ENCODE measurements at regions of chr1 and their contacts with region 1.

Region 1: GRCh38 chr1:159009704-159010361 is at the start of gene IFI16:
- DNase-seq: peak; percentile 70
- H3K4me3 Mint-ChIP-seq: peak within 1 kb of the TSS; percentile 96
- H3K27ac Mint-ChIP-seq: peak within 1 kb of the TSS; percentile 99
- H3K4me1 Mint-ChIP-seq: peaks cover 57% of the 10 kb centered on the region
- H3K27me3 Mint-ChIP-seq: no peaks in the 10 kb centered on the region
- total RNA-seq, gene IFI16: 108 and 113 TPM in 2 replicates

Region 2: DNA sequence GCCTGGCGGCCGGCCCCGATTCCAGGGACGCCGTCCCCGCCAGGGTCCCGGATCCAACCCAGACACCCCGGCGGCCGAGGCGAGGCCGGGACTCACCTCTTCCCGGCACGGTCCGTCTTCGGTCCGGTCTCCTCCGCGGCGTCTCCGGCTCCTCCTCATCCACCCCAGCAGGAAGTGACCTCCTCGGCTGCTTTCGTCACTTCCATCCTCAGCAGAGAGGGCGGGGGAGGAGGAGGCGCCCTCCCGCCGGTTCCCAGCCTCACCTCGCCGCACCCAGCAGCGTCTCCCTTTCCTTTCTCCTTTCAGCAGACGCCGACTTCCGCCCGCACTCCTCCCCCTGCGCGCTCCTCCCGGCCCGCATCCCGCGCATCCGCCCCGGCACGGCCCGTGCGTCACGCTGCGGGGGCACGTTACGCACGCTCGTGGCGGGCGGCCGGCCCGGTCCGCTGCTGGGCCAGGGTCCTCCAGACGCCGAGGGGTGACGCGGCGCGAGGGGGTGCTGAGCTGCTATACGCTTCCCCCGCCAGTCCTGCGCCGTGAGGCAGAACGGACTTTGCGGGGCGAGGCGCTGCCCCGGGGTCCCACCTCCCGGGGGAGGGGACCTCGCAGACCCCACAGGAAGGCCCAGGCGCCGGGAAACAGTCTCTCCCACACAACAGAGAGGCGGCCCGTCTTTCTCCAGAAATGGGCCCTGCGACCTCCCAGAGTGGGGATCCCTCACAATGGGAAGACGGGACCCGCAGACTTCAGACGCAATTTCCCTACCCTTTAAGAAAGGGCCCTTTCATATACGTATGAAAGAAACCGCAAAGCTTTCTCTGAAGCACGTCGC is 1871.4 kb before region 1 on chr1 and contains the start of gene ETV3:
- intact Hi-C with region 1: loop called (anchors 10 kb)
- DNase-seq: peak; percentile 88
- H3K4me3 Mint-ChIP-seq: peak within 1 kb of the TSS; percentile 98
- H3K27ac Mint-ChIP-seq: peak within 1 kb of the TSS; percentile 89
- H3K4me1 Mint-ChIP-seq: peaks cover 72% of the 10 kb centered on the region
- H3K27me3 Mint-ChIP-seq: no peaks in the 10 kb centered on the region
- total RNA-seq, gene ETV3: 240 TPM in 2 replicates

Region 3: DNA sequence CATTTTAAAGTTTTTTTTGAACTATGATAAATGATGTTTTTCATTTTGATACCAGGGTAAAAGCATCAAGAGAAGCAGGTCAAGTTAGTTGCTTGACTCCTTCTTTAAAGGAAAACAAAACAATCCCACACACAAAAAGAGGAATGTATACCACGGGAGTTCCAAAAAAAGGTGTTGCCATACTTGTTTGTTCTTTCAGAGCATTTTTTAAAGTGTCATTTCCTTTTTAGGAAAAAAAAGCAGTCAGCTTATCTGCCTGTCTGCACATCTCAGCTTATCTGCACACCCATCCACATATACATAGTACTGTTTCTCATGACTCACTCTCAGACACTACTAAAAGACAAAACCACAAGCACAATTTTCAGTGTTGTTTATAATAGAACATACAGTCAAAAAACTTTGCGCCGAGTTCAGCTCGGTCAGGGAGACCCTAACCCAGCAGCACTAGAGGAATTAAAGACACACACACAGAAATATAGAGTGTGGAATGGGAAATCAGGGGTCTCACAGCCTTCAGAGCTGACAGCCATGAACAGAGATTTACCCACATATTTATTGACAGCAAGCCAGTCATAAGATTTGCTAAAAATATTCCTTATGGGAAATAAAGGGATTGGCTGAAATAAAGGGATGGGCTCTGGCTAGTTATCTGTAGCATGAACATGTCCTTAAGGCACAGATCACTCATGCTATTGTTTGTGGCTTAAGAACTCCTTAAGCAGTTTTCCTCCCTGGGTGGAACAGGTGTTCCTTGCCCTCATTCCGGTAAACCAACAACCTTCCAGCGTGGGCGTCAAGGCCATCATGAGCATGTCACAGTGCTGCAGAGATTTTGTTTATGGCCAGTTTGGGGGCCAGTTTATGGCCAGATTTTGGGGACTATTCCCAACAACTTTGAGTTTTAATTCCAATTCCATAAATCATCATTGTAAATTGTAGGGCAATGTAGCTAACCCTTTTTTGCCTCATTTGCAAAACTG is 190.1 kb before region 1 on chr1:
- intact Hi-C with region 1: loop called (anchors 1 kb)
- DNase-seq: peak; percentile 26
- H3K4me3 Mint-ChIP-seq: peak overlapping the region; percentile 41
- H3K27ac Mint-ChIP-seq: peak overlapping the region; percentile 84
- H3K4me1 Mint-ChIP-seq: peaks cover 37% of the 10 kb centered on the region
- H3K27me3 Mint-ChIP-seq: peaks cover 3% of the 10 kb centered on the region

Region 4: GRCh38 chr1:158972841-158973240 is 37.0 kb before region 1 on chr1:
- intact Hi-C with region 1: loop called (anchors 1 kb)
- DNase-seq: no peak
- H3K4me3 Mint-ChIP-seq: no peak overlapping the region
- H3K27ac Mint-ChIP-seq: no peak overlapping the region
- H3K4me1 Mint-ChIP-seq: peaks cover 33% of the 10 kb centered on the region
- H3K27me3 Mint-ChIP-seq: no peaks in the 10 kb centered on the region

Region 5: DNA sequence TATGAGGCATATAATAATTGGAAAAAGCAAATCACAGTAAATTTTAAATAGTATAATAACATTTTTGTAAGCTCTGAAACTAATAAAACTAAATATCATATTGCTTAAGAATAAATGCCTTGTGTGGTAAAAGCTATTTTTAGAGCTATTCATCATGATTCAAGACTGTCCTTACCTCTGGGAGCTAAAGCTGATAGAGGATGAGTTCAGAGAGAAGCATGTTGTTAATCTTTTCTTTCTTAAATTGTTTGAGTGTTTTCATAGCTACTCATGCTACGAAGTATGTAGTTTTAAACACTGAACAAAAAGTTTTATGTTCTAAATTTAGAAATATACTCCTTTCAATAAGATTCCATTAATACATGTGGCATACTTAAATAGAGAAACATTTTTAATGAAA is 30.4 kb after region 1 on chr1:
- intact Hi-C with region 1: no loop called
- DNase-seq: no peak
- H3K4me3 Mint-ChIP-seq: no peak overlapping the region
- H3K27ac Mint-ChIP-seq: no peak overlapping the region
- H3K4me1 Mint-ChIP-seq: peaks cover 27% of the 10 kb centered on the region
- H3K27me3 Mint-ChIP-seq: no peaks in the 10 kb centered on the region

Region 6: GRCh38 chr1:159077120-159077961 is 67.5 kb after region 1 on chr1:
- intact Hi-C with region 1: loop called (anchors 1 kb)
- DNase-seq: peak; percentile 95
- H3K4me3 Mint-ChIP-seq: peak overlapping the region; percentile 89
- H3K27ac Mint-ChIP-seq: peak overlapping the region; percentile 98
- H3K4me1 Mint-ChIP-seq: peaks cover 37% of the 10 kb centered on the region
- H3K27me3 Mint-ChIP-seq: no peaks in the 10 kb centered on the region

Region 7: GRCh38 chr1:160261893-160262794 is 1252.3 kb after region 1 on chr1 and contains the start of gene DCAF8:
- intact Hi-C with region 1: loop called (anchors 5 kb)
- DNase-seq: peak; percentile 98
- H3K4me3 Mint-ChIP-seq: peak within 1 kb of the TSS; percentile 98
- H3K27ac Mint-ChIP-seq: peak within 1 kb of the TSS; percentile 99
- H3K4me1 Mint-ChIP-seq: peaks cover 36% of the 10 kb centered on the region
- H3K27me3 Mint-ChIP-seq: no peaks in the 10 kb centered on the region
- total RNA-seq, gene DCAF8: 132 and 143 TPM in 2 replicates